ENCODE measurements at regions of chr15 and their contacts with region 1.

Region 1: DNA sequence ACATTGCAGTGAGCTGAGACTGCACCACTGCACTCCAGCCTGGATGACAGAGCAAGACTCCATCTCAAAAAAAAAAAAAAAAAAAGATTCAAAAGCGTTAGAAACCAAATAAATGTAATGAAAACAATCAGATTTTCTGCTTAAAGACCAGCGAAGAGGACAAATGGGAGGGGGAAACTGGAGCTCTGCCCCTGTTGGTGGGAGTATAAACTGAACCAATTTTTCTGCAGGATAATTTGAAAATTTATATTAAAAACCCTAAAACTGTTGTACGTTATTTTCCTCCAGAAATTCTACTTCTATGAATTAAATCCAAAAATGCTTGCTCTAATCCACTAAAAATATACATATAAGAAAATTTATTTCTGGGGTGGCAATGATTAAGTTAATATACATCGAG is 25.3 kb upstream of the ZSCAN2 start:
- H3K4me3 ChIP-seq: no peak overlapping the region
- H3K27ac ChIP-seq: no peak overlapping the region
- H3K4me1 ChIP-seq: no peaks in the 10 kb centered on the region
- CTCF ChIP-seq: no peak

Region 2: GRCh38 chr15:83775730-83776129 is 799.8 kb before region 1 on chr15:
- CTCF ChIA-PET with region 1: no interaction called
- POLR2A ChIA-PET with region 1: no interaction called
- H3K4me3 ChIP-seq: no peak overlapping the region
- H3K27ac ChIP-seq: no peak overlapping the region
- H3K4me1 ChIP-seq: peaks cover 4% of the 10 kb centered on the region
- CTCF ChIP-seq: no peak

Region 3: GRCh38 chr15:84588053-84588874 is 12.8 kb after region 1 on chr15:
- CTCF ChIA-PET with region 1: interaction called, 41 read pairs
- POLR2A ChIA-PET with region 1: interaction called, 4 read pairs
- H3K4me3 ChIP-seq: peak overlapping the region; percentile 26
- H3K27ac ChIP-seq: no peak overlapping the region
- H3K4me1 ChIP-seq: no peaks in the 10 kb centered on the region
- CTCF ChIP-seq: peak; percentile 86

Region 4: GRCh38 chr15:84840741-84841429 is 265.4 kb after region 1 on chr15:
- CTCF ChIA-PET with region 1: no interaction called
- POLR2A ChIA-PET with region 1: no interaction called
- H3K4me3 ChIP-seq: no peak overlapping the region
- H3K27ac ChIP-seq: no peak overlapping the region
- H3K4me1 ChIP-seq: no peaks in the 10 kb centered on the region
- CTCF ChIP-seq: no peak